ENCODE measurements at regions of chr17 and their contacts with region 1.

Region 1: DNA sequence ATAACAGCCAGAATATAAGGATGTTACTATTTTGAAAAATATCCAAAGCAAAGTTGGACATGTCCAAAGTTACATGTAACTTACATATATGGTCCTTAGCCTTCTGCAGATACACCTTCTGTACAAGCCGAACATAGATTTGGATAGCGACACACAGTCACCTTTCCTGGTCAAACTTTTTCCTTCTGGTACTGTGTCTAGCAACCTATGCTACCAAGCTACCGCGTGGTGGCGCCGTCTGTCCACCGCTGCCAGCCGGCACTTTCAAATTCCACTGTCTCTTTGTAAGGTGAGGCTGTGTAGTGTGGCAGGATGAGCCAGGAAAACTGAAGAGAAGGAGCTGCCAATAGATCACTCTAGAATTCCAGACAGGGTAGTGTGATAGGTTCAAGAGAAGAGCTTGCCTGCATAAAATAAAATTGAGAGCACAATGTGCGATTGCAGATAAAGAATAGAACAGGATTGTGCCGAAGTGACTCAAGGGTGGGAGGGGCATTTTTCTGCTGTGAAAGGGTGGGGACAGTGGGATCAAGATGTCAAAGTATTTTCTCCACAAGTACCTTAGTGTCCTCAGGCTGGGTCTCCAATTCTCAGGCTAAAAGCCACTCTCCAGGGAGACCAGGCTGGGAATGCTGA is 366.9 kb downstream of the SLC39A11 start:
- DNase-seq: peak; percentile 29
- H3K4me3 Mint-ChIP-seq: no peak overlapping the region
- H3K27ac Mint-ChIP-seq: peak overlapping the region; percentile 62
- H3K4me1 Mint-ChIP-seq: peaks cover 40% of the 10 kb centered on the region
- H3K27me3 Mint-ChIP-seq: no peaks in the 10 kb centered on the region

Region 2: DNA sequence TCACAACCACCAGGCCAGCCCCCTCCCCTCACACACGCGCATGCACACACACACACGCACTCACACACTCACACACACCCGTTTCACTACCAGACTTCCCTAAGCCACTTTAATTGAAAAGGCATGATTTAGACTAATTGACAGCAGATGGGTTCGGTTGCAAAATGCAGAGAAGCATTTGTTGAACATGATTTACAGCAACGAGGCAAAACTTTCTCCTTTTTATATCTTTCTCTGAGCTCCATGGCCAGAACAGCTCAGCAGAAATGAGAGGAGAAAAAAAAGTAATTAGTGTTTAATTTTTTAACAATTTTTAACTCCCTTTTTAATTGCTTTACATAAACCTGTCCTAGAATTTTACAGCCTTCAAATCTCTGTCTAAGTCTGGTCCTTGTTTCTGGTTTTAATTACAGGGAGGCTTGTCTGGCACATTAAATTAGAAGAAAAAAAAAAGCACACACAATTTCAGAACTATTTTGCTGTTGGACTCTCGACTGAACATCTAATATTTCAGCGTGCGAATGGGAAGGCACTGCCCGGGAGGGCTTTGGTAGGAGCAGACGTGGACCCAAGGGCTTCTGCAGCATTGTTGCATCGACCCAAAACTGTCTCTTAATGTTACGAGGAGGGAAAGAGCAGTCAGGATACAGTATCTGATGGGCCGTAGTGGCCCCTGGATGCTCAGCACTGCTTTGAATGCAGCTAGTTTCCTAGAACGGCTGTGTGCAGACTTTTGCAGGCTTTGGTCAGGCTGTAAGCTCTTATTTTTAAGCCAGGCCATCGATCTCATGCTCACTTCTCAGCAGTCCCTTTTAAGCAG is 348.8 kb before region 1 on chr17:
- intact Hi-C with region 1: no loop called
- DNase-seq: no peak
- H3K4me3 Mint-ChIP-seq: no peak overlapping the region
- H3K27ac Mint-ChIP-seq: no peak overlapping the region
- H3K4me1 Mint-ChIP-seq: no peaks in the 10 kb centered on the region
- H3K27me3 Mint-ChIP-seq: no peaks in the 10 kb centered on the region

Region 3: GRCh38 chr17:72665852-72666851 is 59.4 kb before region 1 on chr17:
- intact Hi-C with region 1: no loop called
- DNase-seq: no peak
- H3K4me3 Mint-ChIP-seq: no peak overlapping the region
- H3K27ac Mint-ChIP-seq: no peak overlapping the region
- H3K4me1 Mint-ChIP-seq: no peaks in the 10 kb centered on the region
- H3K27me3 Mint-ChIP-seq: no peaks in the 10 kb centered on the region

Region 4: GRCh38 chr17:72743037-72743467 is 17.5 kb after region 1 on chr17:
- intact Hi-C with region 1: no loop called
- DNase-seq: no peak
- H3K4me3 Mint-ChIP-seq: no peak overlapping the region
- H3K27ac Mint-ChIP-seq: no peak overlapping the region
- H3K4me1 Mint-ChIP-seq: no peaks in the 10 kb centered on the region
- H3K27me3 Mint-ChIP-seq: no peaks in the 10 kb centered on the region

Region 5: DNA sequence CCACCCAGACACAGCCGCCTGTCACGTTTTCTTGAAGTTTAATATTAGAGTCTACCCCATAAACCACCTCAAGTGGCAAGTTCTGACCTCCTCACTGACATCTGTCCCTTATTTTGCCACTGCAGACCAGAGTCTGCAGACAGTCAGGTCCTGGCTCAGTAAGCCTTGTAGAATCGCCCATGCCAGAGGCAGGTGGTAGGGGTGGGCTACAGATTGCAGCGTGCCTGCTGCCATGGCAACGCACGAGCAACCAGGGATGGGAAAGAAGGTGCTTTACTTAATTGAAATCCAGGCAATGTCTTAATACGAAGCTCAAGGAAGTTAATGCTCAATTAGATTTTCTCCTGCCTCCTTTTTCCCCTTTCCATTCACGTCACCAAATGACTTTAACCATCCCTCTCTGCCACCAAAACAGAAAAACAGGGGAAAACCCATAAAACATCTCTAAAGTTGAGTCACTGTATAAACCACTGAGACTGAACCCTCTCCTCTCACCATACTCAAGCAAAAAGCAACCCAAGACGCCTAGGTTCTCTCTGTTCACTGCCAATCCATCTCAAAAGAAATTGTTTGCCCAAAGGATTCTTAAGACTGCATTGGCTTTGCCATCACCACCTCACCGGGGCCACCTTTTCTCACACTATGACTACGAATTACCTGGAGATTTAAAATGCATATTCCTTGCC is 138.1 kb after region 1 on chr17:
- intact Hi-C with region 1: loop called (anchors 5 kb)
- DNase-seq: no peak
- H3K4me3 Mint-ChIP-seq: no peak overlapping the region
- H3K27ac Mint-ChIP-seq: peak overlapping the region; percentile 24
- H3K4me1 Mint-ChIP-seq: peaks cover 49% of the 10 kb centered on the region
- H3K27me3 Mint-ChIP-seq: no peaks in the 10 kb centered on the region

Region 6: GRCh38 chr17:73092523-73093135 is 367.1 kb after region 1 on chr17 and contains the start of gene SLC39A11:
- intact Hi-C with region 1: loop called (anchors 1 kb)
- DNase-seq: peak; percentile 87
- H3K4me3 Mint-ChIP-seq: peak within 1 kb of the TSS; percentile 92
- H3K27ac Mint-ChIP-seq: peak within 1 kb of the TSS; percentile 88
- H3K4me1 Mint-ChIP-seq: peaks cover 10% of the 10 kb centered on the region
- H3K27me3 Mint-ChIP-seq: peaks cover 5% of the 10 kb centered on the region
- total RNA-seq, gene SLC39A11: 20.2 and 25.2 TPM in 2 replicates

Region 7: DNA sequence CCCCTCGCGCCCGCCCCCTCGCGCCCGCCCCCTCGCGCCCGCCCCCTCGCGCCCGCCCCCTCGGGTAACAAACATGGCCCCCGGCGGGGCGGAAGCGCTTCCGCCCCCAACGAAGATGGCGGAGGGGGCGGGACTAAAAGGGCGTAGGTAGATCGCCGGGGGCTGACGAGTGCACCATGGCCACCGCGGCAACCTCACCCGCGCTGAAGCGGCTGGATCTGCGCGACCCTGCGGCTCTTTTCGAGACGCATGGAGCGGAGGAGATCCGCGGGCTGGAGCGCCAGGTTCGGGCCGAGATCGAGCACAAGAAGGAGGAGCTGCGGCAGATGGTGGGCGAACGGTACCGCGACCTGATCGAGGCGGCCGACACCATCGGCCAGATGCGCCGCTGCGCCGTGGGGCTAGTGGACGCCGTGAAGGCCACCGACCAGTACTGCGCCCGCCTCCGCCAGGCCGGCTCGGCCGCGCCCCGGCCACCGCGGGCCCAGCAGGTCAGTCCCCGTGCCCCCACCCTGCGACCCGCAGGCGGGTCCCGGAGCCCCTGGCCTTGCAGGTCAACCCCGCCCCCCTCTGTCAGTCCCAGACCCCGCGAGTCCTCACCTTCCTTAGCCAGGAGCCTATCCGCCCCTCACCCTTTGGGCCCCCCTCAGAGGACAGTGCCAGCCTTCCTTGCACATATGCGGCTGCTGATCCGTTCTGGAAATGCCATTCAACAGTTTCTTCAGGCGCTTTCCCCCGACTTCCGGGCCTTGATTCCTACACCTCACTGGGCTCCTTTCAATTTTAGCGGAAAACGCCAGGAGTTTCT is 467.5 kb after region 1 on chr17 and contains the start of gene COG1:
- intact Hi-C with region 1: loop called (anchors 1 kb)
- DNase-seq: peak; percentile 56
- H3K4me3 Mint-ChIP-seq: peak within 1 kb of the TSS; percentile 93
- H3K27ac Mint-ChIP-seq: peak within 1 kb of the TSS; percentile 94
- H3K4me1 Mint-ChIP-seq: peaks cover 15% of the 10 kb centered on the region
- H3K27me3 Mint-ChIP-seq: no peaks in the 10 kb centered on the region
- total RNA-seq, gene COG1: 31.4 and 31.5 TPM in 2 replicates

Region 8: DNA sequence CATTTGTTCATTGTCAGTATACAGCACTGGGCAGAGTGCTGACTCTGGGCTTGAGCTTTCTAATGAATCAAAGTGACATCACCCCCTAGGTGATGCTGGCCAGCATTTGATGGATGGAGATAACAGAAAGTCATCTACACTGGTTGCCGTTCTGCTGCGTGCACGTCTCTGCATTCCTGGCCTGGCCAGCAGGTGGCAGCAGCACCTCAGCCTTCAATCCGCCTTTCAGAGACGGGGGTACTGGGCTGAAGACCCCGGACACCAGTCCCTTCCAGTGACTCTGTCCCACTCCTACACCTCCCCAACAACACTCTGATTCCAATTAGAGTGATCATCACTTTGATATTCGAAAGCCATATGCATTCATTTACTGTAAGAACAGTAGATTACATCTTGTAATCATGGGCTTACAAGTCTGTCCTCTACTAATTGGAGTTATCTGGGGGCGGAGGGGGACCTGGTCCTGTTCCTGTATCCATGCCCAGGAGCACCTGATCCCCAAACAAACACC is 530.2 kb after region 1 on chr17:
- intact Hi-C with region 1: loop called (anchors 5 kb)
- DNase-seq: peak; percentile 36
- H3K4me3 Mint-ChIP-seq: no peak overlapping the region
- H3K27ac Mint-ChIP-seq: no peak overlapping the region
- H3K4me1 Mint-ChIP-seq: no peaks in the 10 kb centered on the region
- H3K27me3 Mint-ChIP-seq: no peaks in the 10 kb centered on the region

Region 9: DNA sequence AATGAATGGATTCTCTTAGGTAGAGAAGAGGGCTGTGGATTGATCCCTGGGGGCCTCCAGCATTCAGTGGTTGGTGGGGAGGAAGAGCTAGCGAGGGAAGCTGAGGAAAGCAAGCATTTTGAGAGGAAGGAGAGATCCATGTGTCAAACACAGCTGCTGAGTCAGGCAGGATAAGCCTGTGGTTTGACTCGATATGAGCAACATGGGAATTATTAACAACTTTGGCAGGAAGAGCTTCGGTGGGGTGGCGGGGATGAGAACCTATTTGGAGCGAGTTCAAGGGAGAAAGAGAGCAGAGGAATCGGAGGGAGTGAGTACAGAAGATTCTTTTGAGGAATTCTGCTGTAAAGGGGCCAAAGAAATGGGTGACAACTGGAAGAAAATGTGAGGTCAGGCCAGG is 645.7 kb after region 1 on chr17:
- intact Hi-C with region 1: loop called (anchors 2 kb)
- DNase-seq: no peak
- H3K4me3 Mint-ChIP-seq: no peak overlapping the region
- H3K27ac Mint-ChIP-seq: no peak overlapping the region
- H3K4me1 Mint-ChIP-seq: no peaks in the 10 kb centered on the region
- H3K27me3 Mint-ChIP-seq: peaks cover 9% of the 10 kb centered on the region

Measured in activated T-helper 2 cell treated with anti-CD3 and anti-CD28 coated beads, Interferon-gamma antibody, Interleukin-2, Interleukin-4, amounts not matched to agents 10 μg/mL and 5 μg/mL and 100 μg/mL, durations not matched to agents 14 hours and 24 hours and 36 hours (primary cell).